Psoas muscle (tissue), 8 donors: ENCODE measurements at regions of chr21 and their contacts with region 1.

Region 1: GRCh38 chr21:17679002-17679600 is 66.4 kb upstream of the BTG3 start:
- DNase-seq: no peak
- ATAC-seq: peak; percentile 53 to 82 (median 67)
- H3K4me3 ChIP-seq: no peak overlapping the region
- H3K27ac ChIP-seq: no peak overlapping the region
- H3K4me1 ChIP-seq: no peaks in the 10 kb centered on the region
- H3K27me3 ChIP-seq: no peaks in the 10 kb centered on the region
- CTCF ChIP-seq: peak; percentile 74

Region 2: GRCh38 chr21:17570786-17571185 is 108.3 kb before region 1 on chr21:
- intact Hi-C with region 1: no loop called
- DNase-seq: no peak
- ATAC-seq: no peak
- H3K4me3 ChIP-seq: no peak overlapping the region
- H3K27ac ChIP-seq: no peak overlapping the region
- H3K4me1 ChIP-seq: no peaks in the 10 kb centered on the region
- H3K27me3 ChIP-seq: peaks cover 0 to 4% (median 0%) of the 10 kb centered on the region in 3 donors
- CTCF ChIP-seq: no peak

Region 3: GRCh38 chr21:17903029-17903806 is 224.1 kb after region 1 on chr21:
- intact Hi-C with region 1: loop called (anchors 5 kb)
- DNase-seq: no peak
- ATAC-seq: no peak
- H3K4me3 ChIP-seq: no peak overlapping the region
- H3K27ac ChIP-seq: no peak overlapping the region
- H3K4me1 ChIP-seq: no peaks in the 10 kb centered on the region
- H3K27me3 ChIP-seq: no peaks in the 10 kb centered on the region
- CTCF ChIP-seq: peak; percentile 30